Dorsolateral prefrontal cortex (tissue), 120 donors: ENCODE measurements at regions of chr14 and their contacts with region 1.

Region 1: GRCh38 chr14:77707724-77708408 is at the starts of genes ALKBH1 and SLIRP:
- DNase-seq: peak; percentile 79 to 94 (median 87)
- H3K4me3 ChIP-seq: peak within 1 kb of the TSS; percentile 75 to 100 (median 94)
- H3K27ac ChIP-seq: peak within 1 kb of the TSS in 50 of 59 donors; percentile 1 to 85 (median 66)
- H3K27me3 ChIP-seq: no peaks in the 10 kb centered on the region
- CTCF ChIP-seq: peak in 31 of 56 donors; percentile 9 to 52 (median 31)
- total RNA-seq, gene ALKBH1: 7.9 to 21.4 (median 12.6) TPM
- total RNA-seq, gene SLIRP: 60.9 to 153 (median 104) TPM

Region 2: DNA sequence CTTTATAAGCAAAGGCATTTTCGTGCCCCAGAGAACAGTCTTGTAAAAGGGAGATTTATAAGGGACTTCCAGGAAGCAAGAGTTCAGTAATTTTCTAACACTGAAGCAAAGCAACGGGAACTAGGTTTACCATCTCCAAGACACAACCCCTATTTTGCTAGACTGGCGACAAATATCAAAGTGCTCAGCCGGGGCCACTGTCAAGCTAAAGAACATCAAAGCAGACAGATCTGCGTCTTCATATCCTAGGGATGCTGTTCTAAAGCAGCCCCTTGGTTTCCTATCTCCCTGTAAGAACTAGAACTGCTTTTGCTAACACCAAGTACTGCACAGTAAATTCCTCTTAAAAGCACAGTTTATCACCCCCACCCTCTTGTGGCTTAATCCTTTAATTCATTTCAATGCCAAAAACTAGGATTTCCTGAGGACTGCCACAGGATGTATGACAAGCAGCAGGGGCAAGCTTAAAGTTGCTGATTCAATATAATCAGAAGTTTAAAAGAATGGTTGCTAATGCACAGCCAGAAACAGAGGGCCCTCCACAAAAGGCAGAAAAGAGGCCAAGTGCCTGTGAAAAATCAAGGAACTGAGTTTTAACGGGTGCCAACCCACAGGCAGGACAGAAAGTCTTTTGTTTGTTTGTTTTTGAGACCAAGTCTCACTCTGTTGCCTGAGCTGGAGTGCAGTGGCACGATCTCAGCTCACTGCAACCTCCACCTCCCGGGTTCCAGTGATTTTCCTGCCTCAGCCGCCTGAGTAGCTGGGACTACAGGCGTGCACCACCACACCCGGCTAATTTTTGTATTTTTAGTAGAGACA is 165.2 kb before region 1 on chr14:
- intact Hi-C with region 1: loop called in 1 of 2 experiments (anchors 5 kb)
- DNase-seq: no peak
- H3K4me3 ChIP-seq: peak overlapping the region in 16 of 59 donors; percentile 0 to 27 (median 11)
- H3K27ac ChIP-seq: peak overlapping the region; percentile 43 to 92 (median 81)
- H3K27me3 ChIP-seq: no peaks in the 10 kb centered on the region
- CTCF ChIP-seq: peak in 1 of 56 donors; percentile 12

Region 3: DNA sequence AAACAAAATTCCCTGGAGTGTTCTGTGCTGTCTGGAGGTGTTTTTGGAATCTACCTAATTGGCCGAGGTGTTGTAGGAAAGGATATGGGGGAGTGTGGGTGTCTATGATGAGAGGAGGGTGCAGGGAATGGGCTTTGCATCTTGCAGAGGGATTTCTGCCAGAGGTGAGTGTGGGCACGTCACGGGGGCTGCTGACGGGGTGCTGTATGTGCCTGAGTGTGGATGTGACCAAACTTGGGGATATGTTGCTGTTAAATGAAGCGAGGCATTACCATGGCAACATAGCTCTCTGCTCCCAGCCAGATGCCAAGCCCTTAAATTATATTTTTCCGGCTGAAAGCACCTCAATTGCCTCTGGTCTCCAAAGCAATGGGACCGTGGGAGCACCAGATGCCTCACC is 47.1 kb before region 1 on chr14:
- intact Hi-C with region 1: loop called in 1 of 2 experiments (anchors 5 kb)
- DNase-seq: peak in 8 of 10 donors; percentile 22 to 78 (median 66)
- H3K4me3 ChIP-seq: peak overlapping the region in 53 of 59 donors; percentile 5 to 61 (median 37)
- H3K27ac ChIP-seq: peak overlapping the region in 38 of 59 donors; percentile 8 to 79 (median 57)
- H3K27me3 ChIP-seq: no peaks in the 10 kb centered on the region
- CTCF ChIP-seq: no peak

Region 4: DNA sequence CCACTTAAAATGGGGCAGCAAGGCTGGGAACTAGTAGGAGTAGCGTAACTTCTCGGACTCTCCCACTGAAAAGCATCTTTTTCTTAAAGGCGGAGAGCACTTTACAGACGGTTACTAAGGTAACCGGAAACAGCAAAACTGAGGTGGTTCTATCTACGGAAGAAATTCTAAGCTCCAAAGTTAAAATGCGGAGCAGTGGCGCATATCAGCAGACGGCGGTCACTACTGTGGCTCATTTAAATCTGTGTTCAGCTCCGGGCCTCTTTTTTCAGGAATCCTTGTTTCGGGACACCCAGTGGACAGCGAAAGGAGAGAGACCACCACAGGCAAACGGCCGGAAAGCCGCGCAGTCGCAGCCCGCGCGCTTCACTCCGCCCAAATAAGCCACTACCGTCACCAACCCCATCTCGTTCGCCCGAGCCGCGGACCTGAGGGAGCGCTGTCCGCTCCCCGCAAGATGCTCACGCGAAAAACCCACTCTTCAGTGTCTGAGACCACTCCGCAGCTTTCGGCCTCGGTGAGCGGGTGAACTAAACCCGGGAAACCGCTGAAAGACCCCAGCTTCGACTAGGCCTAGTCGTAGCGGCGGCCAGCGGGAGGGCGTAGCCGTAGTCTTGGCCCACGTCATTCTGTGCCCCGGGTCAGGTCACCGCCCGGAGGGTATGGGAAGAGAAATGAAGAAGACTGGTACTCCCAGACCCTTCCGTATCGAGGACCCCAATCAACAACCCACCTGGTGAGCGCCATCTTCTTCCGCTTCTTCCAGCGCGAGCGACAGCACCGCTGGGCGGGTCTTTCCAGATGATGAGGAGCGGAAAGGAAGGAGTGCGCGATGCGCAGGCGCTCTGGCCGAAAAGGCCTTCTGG is 52.7 kb after region 1 on chr14 and contains the start of gene SNW1:
- intact Hi-C with region 1: loop called in 1 of 2 experiments (anchors 2 kb)
- DNase-seq: peak; percentile 93 to 97 (median 96)
- H3K4me3 ChIP-seq: peak within 1 kb of the TSS; percentile 63 to 100 (median 93)
- H3K27ac ChIP-seq: peak within 1 kb of the TSS; percentile 68 to 98 (median 91)
- H3K27me3 ChIP-seq: no peaks in the 10 kb centered on the region
- CTCF ChIP-seq: peak in 29 of 56 donors; percentile 6 to 57 (median 28)
- total RNA-seq, gene SNW1: 37.1 to 77.1 (median 57.5) TPM

Region 5: DNA sequence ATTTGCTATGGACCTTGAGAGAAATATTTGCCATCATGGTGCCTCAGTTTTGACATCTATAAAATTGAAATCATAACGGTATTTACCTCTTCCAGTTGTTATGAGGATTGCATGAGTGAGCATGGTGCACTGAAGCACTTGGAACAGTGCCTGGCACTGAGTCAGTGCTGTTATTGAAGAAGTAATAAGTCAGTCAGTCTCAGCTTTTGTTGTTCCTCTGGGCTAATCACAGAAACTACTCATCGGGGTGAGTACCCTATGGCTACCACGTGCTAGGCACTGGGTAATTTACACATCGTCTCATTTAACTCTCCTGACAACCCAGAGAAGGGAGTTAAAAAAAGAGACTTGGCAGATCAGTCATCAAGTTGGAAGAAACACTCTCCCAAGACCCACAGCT is 302.8 kb after region 1 on chr14:
- intact Hi-C with region 1: no loop called
- DNase-seq: peak in 1 of 10 donors; percentile 56
- H3K4me3 ChIP-seq: no peak overlapping the region
- H3K27ac ChIP-seq: peak overlapping the region in 2 of 59 donors; percentile 15 to 17
- H3K27me3 ChIP-seq: no peaks in the 10 kb centered on the region
- CTCF ChIP-seq: no peak